CD4-positive, alpha-beta T cell (primary cell): ENCODE measurements at regions of chr11 and their contacts with region 1.

Region 1: GRCh38 chr11:128453444-128454336 is 133.7 kb downstream of the ETS1 start:
- DNase-seq: peak in 2 of 14 experiments; percentile 25 to 32
- ATAC-seq: peak; percentile 65
- H3K4me3 ChIP-seq: no peak overlapping the region
- H3K4me3 Mint-ChIP-seq: peak overlapping the region; percentile 0
- H3K27ac ChIP-seq: peak overlapping the region; percentile 8 to 23
- H3K27ac Mint-ChIP-seq: peak overlapping the region; percentile 80
- H3K4me1 ChIP-seq: peaks cover 49% of the 10 kb centered on the region
- H3K4me1 Mint-ChIP-seq: peaks cover 84% of the 10 kb centered on the region
- H3K27me3 ChIP-seq: no peaks in the 10 kb centered on the region
- H3K27me3 Mint-ChIP-seq: no peaks in the 10 kb centered on the region
- CTCF ChIP-seq: no peak

Region 2: DNA sequence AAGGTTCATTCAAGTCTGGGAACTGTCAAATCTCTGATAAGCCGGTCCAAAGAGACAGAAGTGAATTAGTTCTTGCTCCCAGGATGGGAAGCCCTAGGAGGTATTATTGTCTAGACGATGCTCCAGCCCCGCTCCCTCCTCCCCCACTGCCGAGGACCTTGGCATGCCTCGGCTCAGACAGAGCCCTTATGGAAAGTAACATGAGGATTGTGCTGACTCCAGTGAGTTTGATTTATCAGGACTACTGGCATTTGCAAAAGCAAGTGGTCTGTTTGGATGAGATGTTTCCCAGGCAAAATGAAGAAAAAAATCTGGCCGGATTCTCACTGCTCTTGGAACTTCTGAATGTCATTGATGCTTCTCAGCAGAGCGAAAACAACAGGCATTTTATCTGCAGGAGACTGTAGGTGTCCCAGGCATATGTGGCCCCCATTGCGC is 207.3 kb before region 1 on chr11:
- CTCF ChIA-PET with region 1: no interaction called
- POLR2A ChIA-PET with region 1: no interaction called
- intact Hi-C with region 1: no loop called
- DNase-seq: no peak
- ATAC-seq: no peak
- H3K4me3 ChIP-seq: no peak overlapping the region
- H3K4me3 Mint-ChIP-seq: no peak overlapping the region
- H3K27ac ChIP-seq: no peak overlapping the region
- H3K27ac Mint-ChIP-seq: no peak overlapping the region
- H3K4me1 ChIP-seq: no peaks in the 10 kb centered on the region
- H3K4me1 Mint-ChIP-seq: no peaks in the 10 kb centered on the region
- H3K27me3 ChIP-seq: no peaks in the 10 kb centered on the region
- H3K27me3 Mint-ChIP-seq: no peaks in the 10 kb centered on the region
- CTCF ChIP-seq: no peak

Region 3: DNA sequence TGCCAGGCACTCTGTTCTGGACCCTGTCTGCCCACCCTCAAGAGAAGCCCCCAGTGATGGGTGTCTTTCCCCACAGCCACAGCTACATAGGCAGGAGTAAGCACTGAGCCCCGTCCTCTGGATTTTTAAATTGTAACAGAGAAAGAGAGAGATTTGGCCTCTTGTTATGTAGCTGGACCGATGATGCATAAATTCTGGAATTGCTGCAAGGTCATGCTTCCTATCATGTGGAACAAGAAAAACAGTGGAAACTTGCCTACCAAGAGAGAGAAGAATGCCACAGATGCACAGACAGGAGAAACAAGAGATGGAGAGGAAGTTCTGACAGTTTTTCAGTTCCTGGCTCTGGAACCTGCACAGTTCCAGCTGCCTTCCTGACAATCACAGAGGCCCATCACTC is 16.6 kb before region 1 on chr11:
- CTCF ChIA-PET with region 1: interaction called, 3 read pairs
- POLR2A ChIA-PET with region 1: interaction called, 4 read pairs
- intact Hi-C with region 1: loop called in 1 of 2 experiments (anchors 2 kb)
- DNase-seq: no peak
- ATAC-seq: no peak
- H3K4me3 ChIP-seq: no peak overlapping the region
- H3K4me3 Mint-ChIP-seq: no peak overlapping the region
- H3K27ac ChIP-seq: no peak overlapping the region
- H3K27ac Mint-ChIP-seq: no peak overlapping the region
- H3K4me1 ChIP-seq: no peaks in the 10 kb centered on the region
- H3K4me1 Mint-ChIP-seq: peaks cover 31% of the 10 kb centered on the region
- H3K27me3 ChIP-seq: no peaks in the 10 kb centered on the region
- H3K27me3 Mint-ChIP-seq: no peaks in the 10 kb centered on the region
- CTCF ChIP-seq: no peak